ENCODE measurements at regions of chr4 and their contacts with region 1.

Region 1: GRCh38 chr4:38364383-38364963 is 299.5 kb upstream of the KLF3 start:
- DNase-seq: no peak
- H3K4me3 ChIP-seq: no peak overlapping the region
- CTCF ChIP-seq: no peak

Region 2: DNA sequence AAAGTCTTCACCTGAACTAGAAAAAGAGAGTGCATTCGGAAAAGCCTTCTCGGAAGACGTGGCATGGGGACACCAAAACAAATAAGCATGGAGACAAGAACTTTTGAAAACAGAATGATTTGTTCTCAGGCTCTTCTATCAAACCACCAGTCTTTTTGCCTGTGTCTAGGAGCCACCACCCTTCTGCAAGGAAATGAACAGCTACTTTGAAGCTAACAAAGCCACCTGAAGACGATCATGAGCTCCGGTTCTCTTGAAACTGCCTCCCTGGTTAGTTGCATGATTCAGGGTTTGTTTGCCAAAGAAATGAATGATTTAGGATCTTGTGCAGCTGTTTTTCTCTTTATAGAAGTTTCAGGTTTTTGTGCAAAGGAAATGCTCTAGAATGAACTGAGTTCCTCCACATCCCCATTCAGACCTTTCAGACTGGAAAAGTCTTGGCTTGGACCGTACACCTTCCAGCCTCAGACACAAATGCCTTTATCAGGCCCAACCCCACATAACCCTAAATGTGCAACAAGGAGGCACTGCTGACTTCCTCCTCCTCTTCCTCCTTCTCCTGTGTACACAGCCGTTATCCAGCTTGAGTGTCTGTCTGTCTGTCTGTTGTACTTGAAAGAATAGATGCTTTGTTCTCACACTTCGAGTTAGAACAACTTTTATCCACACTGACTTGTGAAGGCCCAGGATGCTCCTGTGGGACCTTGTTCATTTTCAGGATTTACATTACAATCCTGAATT is 35.3 kb before region 1 on chr4:
- in situ Hi-C with region 1: loop called (anchors 5 kb)
- DNase-seq: no peak
- H3K4me3 ChIP-seq: no peak overlapping the region
- CTCF ChIP-seq: no peak